IMR-90 (cell line): ENCODE measurements at regions of chr7 and their contacts with region 1.

Region 1: GRCh38 chr7:140738280-140738679 is 41.8 kb downstream of the NDUFB2 start:
- DNase-seq: peak; percentile 28
- ATAC-seq: peak; percentile 91
- H3K4me3 ChIP-seq: no peak overlapping the region
- H3K27ac ChIP-seq: no peak overlapping the region
- H3K4me1 ChIP-seq: no peaks in the 10 kb centered on the region
- H3K27me3 ChIP-seq: no peaks in the 10 kb centered on the region
- CTCF ChIP-seq: no peak
- POLR2A ChIP-seq: no peak
- RAD21 ChIP-seq: no peak

Region 2: GRCh38 chr7:140726281-140726680 is 12.0 kb before region 1 on chr7:
- CTCF ChIA-PET with region 1: interaction called, 11 read pairs
- POLR2A ChIA-PET with region 1: no interaction called
- dilution Hi-C with region 1: no loop called
- in situ Hi-C with region 1: no loop called
- intact Hi-C with region 1: no loop called
- DNase-seq: peak; percentile 23
- ATAC-seq: no peak
- H3K4me3 ChIP-seq: no peak overlapping the region
- H3K27ac ChIP-seq: no peak overlapping the region
- H3K4me1 ChIP-seq: no peaks in the 10 kb centered on the region; the same call in 1 of the 2 replicates
- H3K27me3 ChIP-seq: no peaks in the 10 kb centered on the region
- CTCF ChIP-seq: peak; percentile 36
- POLR2A ChIP-seq: no peak
- RAD21 ChIP-seq: 0 out of 2 replicates have a peak, but pooled peaks have one; percentile 26